ENCODE measurements at regions of chr1 and their contacts with region 1.

Region 1: DNA sequence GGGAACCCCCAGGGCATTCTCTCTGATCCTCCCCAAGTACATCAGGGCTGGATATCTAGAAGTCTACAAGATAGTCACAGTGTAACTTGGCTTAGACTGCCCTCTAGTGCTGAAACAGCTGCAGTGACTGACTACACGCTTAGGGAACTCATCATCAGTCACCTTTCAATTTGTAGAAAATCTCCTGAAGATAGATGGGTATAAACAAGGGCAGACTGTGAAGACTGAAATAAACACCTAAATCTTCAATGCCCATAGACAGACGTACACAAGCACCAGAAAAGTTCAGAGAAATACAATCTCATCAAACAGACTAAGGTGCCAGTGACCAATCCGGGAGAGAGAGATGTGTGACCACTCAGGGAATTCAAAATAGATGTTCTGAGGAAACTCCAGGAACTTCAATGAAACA is 46.6 kb downstream of the PACC1 start:
- DNase-seq: peak; percentile 68
- H3K4me3 ChIP-seq: no peak overlapping the region
- H3K27ac ChIP-seq: no peak overlapping the region
- H3K4me1 ChIP-seq: no peaks in the 10 kb centered on the region
- H3K27me3 ChIP-seq: no peaks in the 10 kb centered on the region
- CTCF ChIP-seq: peak; percentile 77 to 78
- POLR2A ChIP-seq: no peak

Region 2: GRCh38 chr1:212012034-212012740 is 355.9 kb before region 1 on chr1:
- CTCF ChIA-PET with region 1: interaction called, 3 read pairs
- POLR2A ChIA-PET with region 1: no interaction called
- dilution Hi-C with region 1: no loop called
- intact Hi-C with region 1: loop called (anchors 1 kb)
- DNase-seq: peak; percentile 70
- H3K4me3 ChIP-seq: no peak overlapping the region
- H3K27ac ChIP-seq: no peak overlapping the region
- H3K4me1 ChIP-seq: peaks cover 4% of the 10 kb centered on the region
- H3K27me3 ChIP-seq: no peaks in the 10 kb centered on the region
- CTCF ChIP-seq: peak; percentile 90 to 92
- POLR2A ChIP-seq: no peak

Region 3: DNA sequence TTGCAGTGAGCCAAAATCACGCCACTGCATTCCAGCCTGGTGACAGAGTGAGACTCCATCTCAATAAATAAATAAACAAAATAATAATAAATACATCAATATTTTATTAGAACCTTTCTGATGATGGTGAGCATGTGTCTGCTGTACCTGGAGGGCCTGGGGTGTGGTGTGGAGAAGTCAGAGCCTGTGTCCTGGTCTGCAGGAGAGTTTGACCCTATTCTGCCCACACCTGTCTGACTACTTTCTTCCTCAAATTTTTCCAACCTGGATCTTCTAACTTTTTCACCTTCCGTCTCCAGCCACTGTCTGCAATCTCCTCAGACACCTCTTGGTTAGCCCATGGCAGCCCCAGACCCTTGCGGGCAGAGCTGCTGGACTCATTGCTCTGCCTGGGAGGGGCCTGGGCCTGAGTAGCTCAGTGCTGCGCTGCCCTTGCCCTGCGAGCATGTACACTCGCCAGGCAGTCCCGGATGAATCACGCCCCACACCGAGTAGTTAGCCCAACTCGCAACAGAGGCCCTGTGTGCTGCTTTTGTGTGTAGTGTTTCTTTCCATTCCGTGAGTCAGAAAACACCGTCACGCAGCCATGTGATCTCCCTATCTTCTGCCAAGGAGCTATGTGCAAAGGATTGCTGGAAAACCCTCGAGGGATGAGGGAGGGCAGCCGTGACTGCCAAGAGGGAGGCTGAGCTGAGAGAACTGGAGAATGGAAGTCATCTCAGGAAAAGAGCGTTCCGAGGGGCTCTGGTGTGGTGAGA is 101.8 kb after region 1 on chr1:
- CTCF ChIA-PET with region 1: no interaction called
- POLR2A ChIA-PET with region 1: no interaction called
- dilution Hi-C with region 1: no loop called
- intact Hi-C with region 1: no loop called
- DNase-seq: no peak
- H3K4me3 ChIP-seq: no peak overlapping the region
- H3K27ac ChIP-seq: no peak overlapping the region
- H3K4me1 ChIP-seq: no peaks in the 10 kb centered on the region
- H3K27me3 ChIP-seq: peaks cover 2 to 7% of the 10 kb centered on the region in 2 experiments
- CTCF ChIP-seq: no peak
- POLR2A ChIP-seq: no peak

Measured in endothelial cell of umbilical vein (primary cell).